Right ventricle myocardium inferior (tissue), 1 donor: ENCODE measurements at regions of chr22 and their contacts with region 1.

Region 1: GRCh38 chr22:27804470-27805297 is 3.1 kb upstream of the MN1 start:
- DNase-seq: peak; percentile 83
- ATAC-seq: peak; percentile 51

Region 2: GRCh38 chr22:26672590-26673468 is 1131.9 kb before region 1 on chr22:
- intact Hi-C with region 1: loop called (anchors 10 kb)
- DNase-seq: peak; percentile 96
- ATAC-seq: peak; percentile 95

Region 3: DNA sequence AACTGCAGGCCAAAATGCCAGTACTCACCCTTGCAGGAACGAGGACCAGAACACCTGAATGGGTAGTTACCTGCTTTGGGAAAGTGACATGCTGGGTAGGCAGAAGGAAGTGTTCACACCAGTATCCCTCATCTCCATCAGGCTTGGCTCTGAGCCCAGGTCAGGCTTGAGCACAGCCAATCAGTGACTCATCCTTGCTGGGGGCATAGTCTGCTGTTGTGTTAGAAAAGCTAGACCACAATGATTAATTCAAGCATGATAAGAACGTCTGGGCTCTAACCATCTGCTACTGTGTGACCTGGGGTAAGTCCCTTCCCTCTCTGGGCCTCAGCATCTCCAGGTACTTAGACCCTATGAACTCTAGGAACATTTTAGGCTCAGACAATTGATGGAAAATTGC is 696.9 kb before region 1 on chr22:
- intact Hi-C with region 1: loop called (anchors 10 kb)
- DNase-seq: no peak
- ATAC-seq: peak; percentile 9

Region 4: GRCh38 chr22:27420817-27421361 is 383.8 kb before region 1 on chr22:
- intact Hi-C with region 1: loop called (anchors 5 kb)
- DNase-seq: peak; percentile 85
- ATAC-seq: peak; percentile 84

Region 5: DNA sequence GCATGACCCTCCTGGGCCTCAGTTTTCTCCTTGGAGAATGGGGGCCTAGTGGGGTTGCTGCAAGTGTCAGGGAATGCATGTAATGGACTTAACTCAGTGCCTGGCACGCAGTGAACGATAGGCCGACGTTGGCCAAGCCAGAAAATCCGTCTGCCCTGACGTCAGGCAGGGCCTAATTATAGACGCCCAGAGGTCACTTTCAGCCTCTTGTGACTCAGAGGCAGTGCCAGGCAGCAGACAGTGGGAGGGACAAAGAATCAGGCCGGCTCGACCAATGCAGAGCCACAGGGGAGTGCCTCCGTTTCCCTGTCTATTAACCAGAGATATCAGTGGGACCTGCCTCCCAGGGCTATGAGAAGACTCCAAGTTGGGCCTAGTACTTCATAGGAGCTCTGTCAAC is 118.2 kb before region 1 on chr22:
- intact Hi-C with region 1: no loop called
- DNase-seq: peak; percentile 83
- ATAC-seq: peak; percentile 95

Region 6: GRCh38 chr22:27726697-27727449 is 77.8 kb before region 1 on chr22:
- intact Hi-C with region 1: loop called (anchors 5 kb)
- DNase-seq: peak; percentile 86
- ATAC-seq: peak; percentile 93